HEK293T (cell line): ENCODE measurements at regions of chr17 and their contacts with region 1.

Region 1: DNA sequence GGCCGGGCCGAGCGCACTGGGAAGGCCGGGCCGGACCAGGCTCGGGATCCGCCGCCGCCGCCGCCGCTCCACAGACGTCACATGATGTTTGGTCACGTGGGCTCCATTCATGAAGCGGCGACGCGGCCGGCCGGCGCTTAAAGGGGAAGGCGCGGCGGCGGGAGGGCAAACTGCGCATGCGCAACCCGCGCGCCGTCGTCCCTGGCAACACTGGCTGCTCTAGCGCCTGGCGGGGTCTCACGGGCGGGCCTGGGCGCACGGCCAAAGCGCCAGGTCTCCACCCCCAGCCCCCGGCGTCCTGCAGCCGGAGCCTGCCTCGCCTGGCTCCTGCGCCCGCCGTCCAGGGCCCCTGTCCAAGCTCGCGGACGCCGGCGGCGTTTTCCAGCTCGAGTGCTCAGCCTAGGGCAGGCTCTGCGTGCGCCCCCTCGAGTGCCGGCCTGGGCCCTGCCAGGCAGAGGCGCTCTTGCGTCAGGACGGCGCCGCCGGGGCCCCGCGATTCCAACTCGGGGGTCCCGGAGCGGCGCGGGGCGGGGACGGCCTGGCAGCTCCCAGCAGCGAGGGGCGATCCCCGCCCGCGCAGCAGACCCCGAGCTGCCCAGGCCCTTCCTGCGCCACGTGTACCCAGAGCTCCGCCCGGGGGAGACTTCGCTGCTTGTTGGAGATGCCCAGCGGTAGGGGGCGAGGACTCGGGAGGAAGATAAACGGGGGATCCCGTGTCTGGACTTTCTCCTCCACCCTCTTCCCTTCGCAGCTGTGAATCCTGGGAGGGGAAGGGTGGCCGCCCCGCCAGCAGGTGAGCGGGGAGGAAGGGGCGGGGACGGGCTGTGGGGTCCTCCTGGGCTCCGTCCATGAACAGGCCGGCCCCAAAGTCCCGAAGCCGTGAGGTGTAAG is at the start of gene MAFG:
- DNase-seq: peak; percentile 98

Region 2: GRCh38 chr17:81890447-81891299 is 37.2 kb before region 1 on chr17:
- CTCF ChIA-PET with region 1: no interaction called
- POLR2A ChIA-PET with region 1: interaction called, 24 read pairs
- DNase-seq: peak; percentile 38

Region 3: DNA sequence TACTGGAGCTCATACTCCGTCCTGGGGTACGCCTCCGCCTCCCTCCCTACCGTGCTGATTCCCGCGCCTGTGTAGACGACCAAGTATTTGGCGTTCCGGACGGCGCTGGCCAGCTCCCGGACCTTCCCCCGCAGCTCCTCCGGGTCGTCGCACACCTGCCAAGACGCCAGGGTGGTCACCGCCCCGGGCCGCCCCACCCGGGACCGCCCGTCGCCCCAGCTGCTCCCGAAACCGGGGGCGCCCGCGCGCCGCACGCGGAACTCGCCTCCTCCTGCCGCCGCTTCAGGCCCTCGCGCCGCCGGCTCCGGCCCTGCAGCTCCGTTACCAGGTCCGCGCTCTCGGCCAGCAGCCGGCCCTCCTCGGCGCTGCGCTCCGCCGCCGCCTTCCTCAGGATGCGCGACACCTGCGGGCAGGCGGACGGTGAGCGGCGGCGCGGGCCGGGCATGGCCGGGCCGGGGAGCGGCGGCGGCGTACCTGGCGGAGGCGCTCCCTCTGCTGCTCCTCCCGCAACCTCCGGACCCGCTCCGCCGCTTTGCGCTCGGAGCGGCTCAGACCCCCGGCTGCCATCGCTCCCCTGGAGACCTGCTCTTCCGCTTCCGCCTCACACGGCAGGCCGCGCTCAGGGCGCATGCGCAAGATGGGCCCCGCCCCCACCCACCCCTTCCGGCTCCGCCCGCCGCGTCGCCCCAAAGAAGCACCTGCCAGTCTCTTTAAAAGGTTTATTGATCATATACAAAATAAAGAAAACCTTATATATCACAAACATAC is 10.1 kb before region 1 on chr17 and contains the start of gene SIRT7:
- CTCF ChIA-PET with region 1: no interaction called
- POLR2A ChIA-PET with region 1: interaction called, 28 read pairs
- DNase-seq: peak; percentile 97

Region 4: DNA sequence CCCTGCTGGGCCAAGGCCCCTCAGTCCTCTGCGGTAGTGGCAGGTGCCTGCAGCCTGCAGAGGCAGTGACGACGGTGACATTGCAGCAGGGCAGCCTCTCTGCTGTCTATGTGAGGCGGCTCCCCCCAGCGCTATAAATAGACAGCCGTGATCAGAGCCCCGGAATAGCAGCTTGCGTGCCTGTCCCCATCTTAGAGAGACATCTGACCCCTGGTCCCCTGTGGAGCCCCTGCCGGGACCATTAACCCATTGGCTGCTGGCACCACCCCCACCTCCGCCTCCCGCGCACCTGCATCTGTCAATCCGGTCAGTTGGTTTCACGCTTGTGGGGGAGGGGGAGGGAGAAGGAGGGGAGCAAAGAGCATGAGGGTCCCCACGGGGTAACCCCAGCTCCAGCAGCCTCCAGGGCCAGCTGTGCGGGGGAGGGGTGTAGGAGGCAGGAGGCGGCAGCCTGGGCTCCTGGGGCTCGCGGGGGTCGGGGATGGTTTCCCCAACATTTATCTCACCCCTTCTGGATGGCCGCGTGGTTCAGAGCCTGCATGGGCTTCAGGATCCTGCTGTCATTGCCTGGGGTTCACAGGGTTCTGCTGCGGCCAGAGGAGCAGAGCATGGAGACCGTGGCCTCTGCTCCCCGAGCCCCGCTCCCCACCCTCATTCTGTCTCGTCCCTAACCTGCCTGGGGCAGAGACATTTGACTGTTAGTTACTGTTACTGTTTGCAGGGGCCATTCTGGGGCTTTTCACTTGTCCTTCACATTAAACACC is 14.1 kb after region 1 on chr17:
- CTCF ChIA-PET with region 1: interaction called, 4 read pairs
- POLR2A ChIA-PET with region 1: interaction called, 37 read pairs
- DNase-seq: no peak